Activated CD4-positive, alpha-beta T cell treated with anti-CD3 and anti-CD28 coated beads for 36 hours (primary cell): ENCODE measurements at regions of chr1 and their contacts with region 1.

Region 1: GRCh38 chr1:64242895-64243756 is 39.7 kb downstream of the UBE2U start:
- DNase-seq: no peak
- ATAC-seq: peak; percentile 30
- H3K4me3 Mint-ChIP-seq: peak overlapping the region; percentile 1
- H3K27ac Mint-ChIP-seq: peak overlapping the region; percentile 45
- H3K4me1 Mint-ChIP-seq: peaks cover 19% of the 10 kb centered on the region
- H3K27me3 Mint-ChIP-seq: peaks cover 12% of the 10 kb centered on the region

Region 2: GRCh38 chr1:62841587-62842169 is 1401.4 kb before region 1 on chr1:
- CTCF ChIA-PET with region 1: no interaction called
- POLR2A ChIA-PET with region 1: no interaction called
- intact Hi-C with region 1: loop called in 1 of 2 experiments (anchors 10 kb)
- DNase-seq: no peak
- ATAC-seq: no peak
- H3K4me3 Mint-ChIP-seq: no peak overlapping the region
- H3K27ac Mint-ChIP-seq: no peak overlapping the region
- H3K4me1 Mint-ChIP-seq: no peaks in the 10 kb centered on the region
- H3K27me3 Mint-ChIP-seq: no peaks in the 10 kb centered on the region

Region 3: GRCh38 chr1:63557365-63557987 is 685.6 kb before region 1 on chr1:
- CTCF ChIA-PET with region 1: interaction called, 3 read pairs
- POLR2A ChIA-PET with region 1: no interaction called
- intact Hi-C with region 1: loop called in 1 of 2 experiments (anchors 5 kb)
- DNase-seq: peak; percentile 44
- ATAC-seq: no peak
- H3K4me3 Mint-ChIP-seq: no peak overlapping the region
- H3K27ac Mint-ChIP-seq: no peak overlapping the region
- H3K4me1 Mint-ChIP-seq: no peaks in the 10 kb centered on the region
- H3K27me3 Mint-ChIP-seq: no peaks in the 10 kb centered on the region

Region 4: GRCh38 chr1:63615768-63616420 is 627.2 kb before region 1 on chr1:
- CTCF ChIA-PET with region 1: interaction called, 6 read pairs
- POLR2A ChIA-PET with region 1: no interaction called
- intact Hi-C with region 1: loop called (anchors 1 kb)
- DNase-seq: peak; percentile 63
- ATAC-seq: peak; percentile 65
- H3K4me3 Mint-ChIP-seq: no peak overlapping the region
- H3K27ac Mint-ChIP-seq: no peak overlapping the region
- H3K4me1 Mint-ChIP-seq: no peaks in the 10 kb centered on the region
- H3K27me3 Mint-ChIP-seq: no peaks in the 10 kb centered on the region

Region 5: DNA sequence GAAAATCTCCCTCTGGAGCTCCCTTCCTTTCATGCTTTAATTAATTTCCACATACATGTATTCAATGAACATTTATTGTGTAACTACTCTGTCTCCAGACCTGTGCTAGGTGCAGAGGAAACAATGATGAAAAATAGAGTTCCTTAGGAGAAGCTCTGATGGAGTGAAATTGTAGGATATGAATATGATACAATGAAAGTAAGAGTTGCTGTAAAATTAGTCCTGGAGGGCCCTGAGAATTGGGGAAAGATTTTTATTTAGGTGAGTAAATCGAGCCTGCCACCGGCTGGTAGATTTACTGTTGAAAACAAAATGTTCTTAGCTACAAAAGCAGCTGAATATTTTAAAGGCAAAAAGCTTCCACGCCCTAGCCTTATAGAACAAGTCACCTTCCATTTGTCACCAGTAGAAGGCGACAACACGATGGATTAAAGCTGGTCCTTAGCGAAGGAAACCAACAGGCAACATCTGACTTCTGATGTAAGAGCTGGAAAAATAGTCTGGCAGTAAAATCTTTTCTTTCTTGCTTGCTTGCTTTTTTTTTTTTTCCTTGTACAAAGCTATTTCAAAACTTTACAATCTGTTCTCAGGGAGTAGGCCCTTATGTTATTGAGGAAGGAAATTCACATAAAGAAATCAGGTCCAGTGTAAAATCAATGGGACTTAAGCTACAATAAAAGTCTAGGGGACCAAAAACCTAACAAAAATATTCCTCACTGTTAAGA is 551.3 kb before region 1 on chr1:
- CTCF ChIA-PET with region 1: interaction called, 37 read pairs
- POLR2A ChIA-PET with region 1: no interaction called
- intact Hi-C with region 1: loop called (anchors 1 kb)
- DNase-seq: peak; percentile 52
- ATAC-seq: peak; percentile 60
- H3K4me3 Mint-ChIP-seq: no peak overlapping the region
- H3K27ac Mint-ChIP-seq: no peak overlapping the region
- H3K4me1 Mint-ChIP-seq: no peaks in the 10 kb centered on the region
- H3K27me3 Mint-ChIP-seq: no peaks in the 10 kb centered on the region

Region 6: DNA sequence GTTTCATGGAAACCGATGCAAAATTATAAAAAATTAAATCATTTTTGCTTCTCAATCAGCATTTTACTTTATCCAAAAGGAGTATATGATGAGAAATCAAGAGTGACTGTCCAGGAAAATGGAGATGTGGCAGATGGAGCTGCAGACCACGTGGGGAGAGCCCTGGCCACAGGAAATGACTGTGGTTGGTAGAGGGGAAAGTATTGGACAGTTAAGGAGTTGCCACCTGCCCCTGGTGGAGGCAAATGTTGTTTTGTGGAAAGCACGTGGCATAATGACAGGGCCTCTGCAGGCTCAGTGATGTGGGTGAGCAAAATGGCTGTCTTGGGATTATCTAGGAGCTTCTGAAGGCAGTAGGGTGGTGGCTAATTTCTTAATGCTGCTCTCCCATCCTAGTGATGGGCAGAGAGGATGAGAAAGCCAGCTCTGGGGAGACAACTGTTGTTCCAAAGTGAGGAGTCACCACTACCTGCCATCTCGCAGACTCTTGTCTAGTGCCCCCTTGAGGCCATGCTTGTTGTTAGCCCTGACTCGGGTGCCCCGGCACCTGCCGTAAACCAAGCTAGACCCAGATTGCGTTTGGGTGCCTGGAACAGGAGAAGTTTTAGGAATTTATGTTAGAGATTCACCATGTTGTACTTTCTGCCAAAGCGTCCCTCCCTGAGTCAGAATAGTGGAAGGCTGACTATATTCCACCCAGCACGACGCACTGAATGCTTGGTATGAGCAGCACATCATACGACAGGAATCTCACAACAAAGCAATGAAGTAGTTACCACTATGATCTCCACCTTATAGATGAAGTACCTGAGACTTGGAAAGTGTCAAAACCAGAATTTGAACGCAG is 325.3 kb before region 1 on chr1:
- CTCF ChIA-PET with region 1: no interaction called
- POLR2A ChIA-PET with region 1: no interaction called
- intact Hi-C with region 1: loop called in 1 of 2 experiments (anchors 5 kb)
- DNase-seq: peak; percentile 51
- ATAC-seq: no peak
- H3K4me3 Mint-ChIP-seq: no peak overlapping the region
- H3K27ac Mint-ChIP-seq: no peak overlapping the region
- H3K4me1 Mint-ChIP-seq: no peaks in the 10 kb centered on the region
- H3K27me3 Mint-ChIP-seq: peaks cover 2% of the 10 kb centered on the region

Region 7: GRCh38 chr1:64136752-64137411 is 106.2 kb before region 1 on chr1:
- CTCF ChIA-PET with region 1: interaction called, 24 read pairs
- POLR2A ChIA-PET with region 1: no interaction called
- intact Hi-C with region 1: loop called (anchors 1 to 5 kb)
- DNase-seq: peak; percentile 82
- ATAC-seq: peak; percentile 75
- H3K4me3 Mint-ChIP-seq: no peak overlapping the region
- H3K27ac Mint-ChIP-seq: no peak overlapping the region
- H3K4me1 Mint-ChIP-seq: peaks cover 5% of the 10 kb centered on the region
- H3K27me3 Mint-ChIP-seq: no peaks in the 10 kb centered on the region

Region 8: DNA sequence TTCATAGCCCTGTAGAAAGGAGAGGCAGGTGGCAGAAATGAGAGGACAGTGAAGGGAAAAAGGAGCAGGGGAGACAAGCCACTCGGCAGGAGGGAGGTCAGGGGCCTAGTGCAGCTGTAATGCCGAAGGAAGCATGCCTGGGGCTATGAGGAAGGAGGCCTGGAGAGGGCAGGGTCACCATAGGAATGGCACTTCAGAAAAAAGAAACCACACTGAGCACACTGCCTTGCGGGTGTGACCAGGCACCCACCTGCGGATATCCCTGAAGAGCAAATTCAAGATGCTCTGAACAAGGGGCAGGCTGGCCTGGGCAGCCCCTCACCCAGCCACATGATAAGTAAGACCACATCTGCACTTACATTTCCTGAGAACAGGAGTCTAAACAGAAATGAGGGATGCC is 618.5 kb after region 1 on chr1:
- CTCF ChIA-PET with region 1: no interaction called
- POLR2A ChIA-PET with region 1: no interaction called
- intact Hi-C with region 1: no loop called
- DNase-seq: peak; percentile 22
- ATAC-seq: no peak
- H3K4me3 Mint-ChIP-seq: no peak overlapping the region
- H3K27ac Mint-ChIP-seq: no peak overlapping the region
- H3K4me1 Mint-ChIP-seq: peaks cover 18% of the 10 kb centered on the region
- H3K27me3 Mint-ChIP-seq: no peaks in the 10 kb centered on the region